CD8-positive, alpha-beta T cell (primary cell): ENCODE measurements at regions of chr19 and their contacts with region 1.

Region 1: GRCh38 chr19:12789904-12790619 is 1.2 kb upstream of the JUNB start:
- DNase-seq: peak; percentile 84 to 98 (median 91)
- ATAC-seq: peak; percentile 29
- H3K4me3 ChIP-seq: peak overlapping the region; percentile 86 to 100
- H3K4me3 Mint-ChIP-seq: peak overlapping the region; percentile 93
- H3K27ac ChIP-seq: peak overlapping the region; percentile 100
- H3K27ac Mint-ChIP-seq: peak overlapping the region; percentile 97
- H3K4me1 ChIP-seq: peaks cover 47% of the 10 kb centered on the region
- H3K4me1 Mint-ChIP-seq: peaks cover 37% of the 10 kb centered on the region
- H3K27me3 ChIP-seq: no peaks in the 10 kb centered on the region
- H3K27me3 Mint-ChIP-seq: no peaks in the 10 kb centered on the region
- CTCF ChIP-seq: no peak

Region 2: GRCh38 chr19:11425719-11426421 is 1364.2 kb before region 1 on chr19:
- CTCF ChIA-PET with region 1: no interaction called
- POLR2A ChIA-PET with region 1: no interaction called
- intact Hi-C with region 1: no loop called
- DNase-seq: peak in 1 of 9 experiments; percentile 20
- ATAC-seq: no peak
- H3K4me3 ChIP-seq: no peak overlapping the region
- H3K4me3 Mint-ChIP-seq: no peak overlapping the region
- H3K27ac ChIP-seq: no peak overlapping the region
- H3K27ac Mint-ChIP-seq: no peak overlapping the region
- H3K4me1 ChIP-seq: peaks cover 33% of the 10 kb centered on the region
- H3K4me1 Mint-ChIP-seq: peaks cover 23% of the 10 kb centered on the region
- H3K27me3 ChIP-seq: peaks cover 17 to 32% of the 10 kb centered on the region in 2 experiments
- H3K27me3 Mint-ChIP-seq: peaks cover 23% of the 10 kb centered on the region
- CTCF ChIP-seq: no peak

Region 3: GRCh38 chr19:12574036-12574435 is 216.0 kb before region 1 on chr19:
- CTCF ChIA-PET with region 1: no interaction called
- POLR2A ChIA-PET with region 1: no interaction called
- intact Hi-C with region 1: no loop called
- DNase-seq: peak in 2 of 9 experiments; percentile 25 to 52
- ATAC-seq: peak; percentile 57
- H3K4me3 ChIP-seq: peak overlapping the region in 1 of 2 experiments; percentile 29
- H3K4me3 Mint-ChIP-seq: peak overlapping the region; percentile 27
- H3K27ac ChIP-seq: no peak overlapping the region
- H3K27ac Mint-ChIP-seq: peak overlapping the region; percentile 65
- H3K4me1 ChIP-seq: peaks cover 9% of the 10 kb centered on the region
- H3K4me1 Mint-ChIP-seq: peaks cover 11% of the 10 kb centered on the region
- H3K27me3 ChIP-seq: no peaks in the 10 kb centered on the region
- H3K27me3 Mint-ChIP-seq: no peaks in the 10 kb centered on the region
- CTCF ChIP-seq: no peak

Region 4: GRCh38 chr19:12722566-12723380 is 67.3 kb before region 1 on chr19:
- CTCF ChIA-PET with region 1: interaction called, 3 read pairs
- POLR2A ChIA-PET with region 1: interaction called, 16 read pairs
- intact Hi-C with region 1: no loop called
- DNase-seq: peak; percentile 81 to 99 (median 92)
- ATAC-seq: peak; percentile 88
- H3K4me3 ChIP-seq: peak overlapping the region; percentile 78 to 85
- H3K4me3 Mint-ChIP-seq: peak overlapping the region; percentile 93
- H3K27ac ChIP-seq: peak overlapping the region; percentile 55 to 80
- H3K27ac Mint-ChIP-seq: peak overlapping the region; percentile 89
- H3K4me1 ChIP-seq: peaks cover 28% of the 10 kb centered on the region
- H3K4me1 Mint-ChIP-seq: peaks cover 37% of the 10 kb centered on the region
- H3K27me3 ChIP-seq: no peaks in the 10 kb centered on the region
- H3K27me3 Mint-ChIP-seq: no peaks in the 10 kb centered on the region
- CTCF ChIP-seq: no peak

Region 5: GRCh38 chr19:12745166-12745897 is 44.7 kb before region 1 on chr19:
- CTCF ChIA-PET with region 1: no interaction called
- POLR2A ChIA-PET with region 1: no interaction called
- intact Hi-C with region 1: no loop called
- DNase-seq: no peak
- ATAC-seq: no peak
- H3K4me3 ChIP-seq: no peak overlapping the region
- H3K4me3 Mint-ChIP-seq: no peak overlapping the region
- H3K27ac ChIP-seq: no peak overlapping the region
- H3K27ac Mint-ChIP-seq: no peak overlapping the region
- H3K4me1 ChIP-seq: no peaks in the 10 kb centered on the region
- H3K4me1 Mint-ChIP-seq: peaks cover 3% of the 10 kb centered on the region
- H3K27me3 ChIP-seq: no peaks in the 10 kb centered on the region
- H3K27me3 Mint-ChIP-seq: no peaks in the 10 kb centered on the region
- CTCF ChIP-seq: no peak

Region 6: DNA sequence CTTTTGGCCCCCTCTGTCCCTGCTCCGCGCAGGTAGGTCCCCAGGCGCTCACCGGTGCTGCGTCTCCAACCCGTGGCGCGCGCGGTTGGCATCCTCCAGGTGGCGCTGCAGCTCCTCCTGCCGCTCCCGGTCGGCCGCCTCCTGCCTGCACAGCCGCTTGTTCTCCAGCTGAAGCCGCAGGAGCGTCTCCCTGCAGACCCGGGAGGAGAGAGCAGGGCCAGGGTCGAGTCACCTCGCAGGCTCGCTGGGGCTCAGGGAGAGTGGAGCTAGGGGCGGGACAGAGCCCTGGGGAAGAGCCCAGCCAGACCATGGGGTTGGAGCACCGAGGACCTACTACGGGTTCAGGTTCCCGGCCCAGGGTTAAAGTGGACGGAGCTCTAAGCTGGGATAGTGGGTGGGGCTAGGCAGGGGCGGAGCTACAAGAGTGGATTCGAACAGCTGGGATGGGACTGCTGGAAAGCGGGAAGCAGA is 24.0 kb before region 1 on chr19:
- CTCF ChIA-PET with region 1: interaction called, 339 read pairs
- POLR2A ChIA-PET with region 1: interaction called, 16 read pairs
- intact Hi-C with region 1: no loop called
- DNase-seq: peak in 8 of 9 experiments; percentile 54 to 90 (median 78)
- ATAC-seq: peak; percentile 61
- H3K4me3 ChIP-seq: no peak overlapping the region
- H3K4me3 Mint-ChIP-seq: no peak overlapping the region
- H3K27ac ChIP-seq: no peak overlapping the region
- H3K27ac Mint-ChIP-seq: no peak overlapping the region
- H3K4me1 ChIP-seq: no peaks in the 10 kb centered on the region
- H3K4me1 Mint-ChIP-seq: peaks cover 3% of the 10 kb centered on the region
- H3K27me3 ChIP-seq: no peaks in the 10 kb centered on the region
- H3K27me3 Mint-ChIP-seq: no peaks in the 10 kb centered on the region
- CTCF ChIP-seq: peak; percentile 56

Region 7: DNA sequence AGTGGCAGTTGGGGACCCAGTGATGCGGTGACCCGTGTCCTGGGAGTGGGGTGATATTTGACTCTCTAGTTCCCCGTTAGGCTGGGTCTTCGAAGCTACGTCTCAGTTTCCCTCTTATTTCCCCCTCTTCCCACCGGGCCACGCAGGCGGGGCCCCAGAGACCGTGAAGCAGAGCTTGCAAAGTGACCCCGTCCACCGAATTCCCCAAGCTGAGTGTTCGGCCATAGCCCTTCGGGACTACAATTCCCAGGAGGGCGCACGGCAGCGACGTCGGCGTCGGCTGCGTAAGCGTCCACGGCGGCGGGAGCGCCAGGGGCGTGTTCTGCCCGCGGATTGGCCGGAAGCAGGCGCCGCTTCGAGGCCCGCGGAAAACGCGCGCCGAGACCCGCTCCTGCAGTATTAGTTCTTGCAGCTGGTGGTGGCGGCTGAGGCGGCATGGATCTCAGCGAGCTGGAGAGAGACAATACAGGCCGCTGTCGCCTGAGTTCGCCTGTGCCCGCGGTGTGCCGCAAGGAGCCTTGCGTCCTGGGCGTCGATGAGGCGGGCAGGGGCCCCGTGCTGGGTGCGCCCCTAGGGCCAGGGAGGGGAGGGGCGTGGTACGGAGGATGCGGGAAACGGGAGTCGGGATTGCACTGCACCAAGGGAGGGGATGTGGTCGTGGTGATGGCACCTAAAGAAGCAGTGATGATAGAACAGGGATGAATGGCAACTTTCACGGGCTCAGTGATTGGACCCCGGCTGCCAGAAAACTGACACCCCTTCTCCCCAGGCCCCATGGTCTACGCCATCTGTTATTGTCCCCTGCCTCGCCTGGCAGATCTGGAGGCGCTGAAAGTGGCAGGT is 16.4 kb after region 1 on chr19 and contains the start of gene RNASEH2A:
- CTCF ChIA-PET with region 1: interaction called, 21 read pairs
- POLR2A ChIA-PET with region 1: interaction called, 28 read pairs
- intact Hi-C with region 1: no loop called
- DNase-seq: peak; percentile 66 to 93 (median 85)
- ATAC-seq: peak; percentile 92
- H3K4me3 ChIP-seq: peak within 1 kb of the TSS; percentile 60 to 68
- H3K4me3 Mint-ChIP-seq: peak within 1 kb of the TSS; percentile 92
- H3K27ac ChIP-seq: peak within 1 kb of the TSS; percentile 54 to 63
- H3K27ac Mint-ChIP-seq: peak within 1 kb of the TSS; percentile 78
- H3K4me1 ChIP-seq: peaks cover 18% of the 10 kb centered on the region
- H3K4me1 Mint-ChIP-seq: peaks cover 26% of the 10 kb centered on the region
- H3K27me3 ChIP-seq: no peaks in the 10 kb centered on the region
- H3K27me3 Mint-ChIP-seq: no peaks in the 10 kb centered on the region
- CTCF ChIP-seq: no peak
- total RNA-seq, gene RNASEH2A: 1.3 to 2.2 TPM

Region 8: GRCh38 chr19:14383661-14384555 is 1593.8 kb after region 1 on chr19:
- CTCF ChIA-PET with region 1: no interaction called
- POLR2A ChIA-PET with region 1: no interaction called
- intact Hi-C with region 1: loop called in 1 of 2 experiments (anchors 5 kb)
- DNase-seq: peak in 7 of 9 experiments; percentile 52 to 89 (median 73)
- ATAC-seq: peak; percentile 10
- H3K4me3 ChIP-seq: peak overlapping the region; percentile 69 to 82
- H3K4me3 Mint-ChIP-seq: peak overlapping the region; percentile 90
- H3K27ac ChIP-seq: peak overlapping the region; percentile 75 to 97
- H3K27ac Mint-ChIP-seq: peak overlapping the region; percentile 94
- H3K4me1 ChIP-seq: peaks cover 39% of the 10 kb centered on the region
- H3K4me1 Mint-ChIP-seq: peaks cover 41% of the 10 kb centered on the region
- H3K27me3 ChIP-seq: no peaks in the 10 kb centered on the region
- H3K27me3 Mint-ChIP-seq: no peaks in the 10 kb centered on the region
- CTCF ChIP-seq: no peak